ENCODE measurements at regions of chr6 and their contacts with region 1.

Region 1: DNA sequence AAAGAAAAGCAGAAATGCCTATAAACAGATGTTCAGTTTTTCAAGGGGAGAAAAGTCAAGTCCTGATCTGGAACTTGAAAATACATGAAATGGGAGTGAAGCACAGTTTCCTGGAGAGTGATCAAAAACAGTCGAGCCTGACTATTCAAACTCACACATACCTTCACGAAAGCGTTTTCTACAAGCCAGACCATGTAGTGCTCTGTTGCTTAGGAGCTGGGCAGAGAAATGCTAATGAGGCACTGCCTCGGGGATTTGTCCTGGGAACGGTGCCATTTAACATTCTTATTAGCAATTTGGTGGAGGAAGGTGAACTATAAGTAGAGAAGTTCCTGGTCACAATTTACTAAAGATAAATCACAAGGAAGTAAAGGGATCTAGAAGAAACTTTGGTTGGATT is 5.9 kb downstream of the NHSL1 start:
- DNase-seq: no peak
- ATAC-seq: no peak
- H3K4me3 ChIP-seq: no peak overlapping the region
- H3K27ac ChIP-seq: no peak overlapping the region
- H3K4me1 ChIP-seq: no peaks in the 10 kb centered on the region
- H3K27me3 ChIP-seq: peaks cover 0 to 2% of the 10 kb centered on the region in 2 experiments; a peak in 1 of 4 replicates
- CTCF ChIP-seq: no peak
- EP300 ChIP-seq: no peak
- POLR2A ChIP-seq: no peak
- RAD21 ChIP-seq: no peak

Region 2: GRCh38 chr6:138415125-138415524 is 78.3 kb before region 1 on chr6:
- CTCF ChIA-PET with region 1: no interaction called
- POLR2A ChIA-PET with region 1: no interaction called
- RAD21 ChIA-PET with region 1: no interaction called
- SMC1A ChIA-PET with region 1: no interaction called
- in situ Hi-C with region 1: no loop called
- intact Hi-C with region 1: no loop called
- DNase-seq: no peak
- ATAC-seq: no peak
- H3K4me3 ChIP-seq: no peak overlapping the region
- H3K27ac ChIP-seq: no peak overlapping the region
- H3K4me1 ChIP-seq: peaks cover 6% of the 10 kb centered on the region; the same call in 1 of the 2 replicates
- H3K27me3 ChIP-seq: no peaks in the 10 kb centered on the region
- CTCF ChIP-seq: no peak
- EP300 ChIP-seq: no peak
- POLR2A ChIP-seq: no peak
- RAD21 ChIP-seq: no peak

Region 3: DNA sequence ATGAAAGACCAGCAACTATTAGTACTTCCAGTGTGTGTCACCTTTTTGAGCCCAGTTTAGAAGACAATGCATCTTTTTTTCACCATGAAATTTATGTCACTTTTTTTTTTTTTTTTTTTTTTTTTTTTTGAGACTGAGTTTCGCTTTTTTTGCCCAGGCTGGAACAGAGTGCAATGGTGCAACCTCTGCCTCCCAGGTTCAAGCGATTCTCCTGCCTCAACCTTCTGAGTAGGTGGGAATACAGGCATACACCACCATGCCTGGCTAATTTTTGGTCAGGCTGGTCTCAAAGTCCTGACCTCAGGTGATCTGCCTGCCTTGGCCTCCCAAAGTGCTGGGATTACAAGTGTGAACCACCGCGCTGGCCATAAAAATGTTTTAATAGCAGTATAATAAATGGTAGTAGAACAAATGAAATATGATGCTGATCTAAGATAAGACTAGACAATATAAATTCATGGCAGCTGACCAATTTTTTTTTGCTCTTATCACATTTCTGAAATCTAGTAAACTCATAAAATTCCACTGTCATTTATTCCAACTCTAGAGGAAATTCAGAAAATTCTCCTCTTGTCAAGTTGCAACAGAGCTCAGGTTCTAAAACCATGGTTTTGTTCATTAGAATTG is 15.4 kb before region 1 on chr6:
- CTCF ChIA-PET with region 1: interaction called, 9 read pairs
- POLR2A ChIA-PET with region 1: interaction called, 6 read pairs
- RAD21 ChIA-PET with region 1: interaction called, 14 read pairs
- SMC1A ChIA-PET with region 1: interaction called, 139 read pairs
- in situ Hi-C with region 1: no loop called
- intact Hi-C with region 1: no loop called
- DNase-seq: no peak
- ATAC-seq: no peak
- H3K4me3 ChIP-seq: no peak overlapping the region
- H3K27ac ChIP-seq: no peak overlapping the region
- H3K4me1 ChIP-seq: no peaks in the 10 kb centered on the region
- H3K27me3 ChIP-seq: no peaks in the 10 kb centered on the region; a peak in 1 of 4 replicates
- CTCF ChIP-seq: no peak
- EP300 ChIP-seq: no peak
- POLR2A ChIP-seq: no peak
- RAD21 ChIP-seq: no peak

Region 4: DNA sequence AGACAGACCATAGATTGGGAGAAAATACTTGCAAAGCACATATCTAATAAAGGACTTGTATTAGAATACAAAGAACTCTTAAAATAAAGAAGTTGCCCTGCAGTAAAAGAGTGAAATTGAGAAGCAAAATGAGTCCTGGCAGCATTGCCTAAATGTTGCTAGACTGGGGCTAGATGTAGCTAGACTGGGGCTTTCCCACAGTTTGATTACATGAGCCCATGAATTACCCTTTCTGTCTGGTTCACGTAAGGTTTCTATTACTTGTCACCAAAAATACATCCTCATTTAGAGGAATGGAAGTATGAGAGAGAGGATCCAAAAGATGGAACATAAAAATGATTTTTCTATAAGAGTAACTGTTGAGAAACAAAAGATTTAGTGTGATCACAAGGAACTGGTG is 222.6 kb after region 1 on chr6:
- CTCF ChIA-PET with region 1: no interaction called
- POLR2A ChIA-PET with region 1: no interaction called
- RAD21 ChIA-PET with region 1: no interaction called
- SMC1A ChIA-PET with region 1: no interaction called
- in situ Hi-C with region 1: no loop called
- intact Hi-C with region 1: no loop called
- DNase-seq: no peak
- ATAC-seq: peak; percentile 73
- H3K4me3 ChIP-seq: no peak overlapping the region
- H3K27ac ChIP-seq: no peak overlapping the region
- H3K4me1 ChIP-seq: no peaks in the 10 kb centered on the region
- H3K27me3 ChIP-seq: no peaks in the 10 kb centered on the region
- CTCF ChIP-seq: no peak
- EP300 ChIP-seq: no peak
- POLR2A ChIP-seq: no peak
- RAD21 ChIP-seq: no peak

Measured in GM12878 (cell line).